ENCODE measurements at regions of chr1 and their contacts with region 1.

Region 1: GRCh38 chr1:246506674-246507481 is at the start of gene SMYD3:
- DNase-seq: peak; percentile 78
- H3K4me3 ChIP-seq: peak within 1 kb of the TSS; percentile 62 to 96 (median 66)
- H3K27ac ChIP-seq: peak within 1 kb of the TSS; percentile 68 to 76 (median 74)
- H3K4me1 ChIP-seq: peaks cover 7 to 13% (median 10%) of the 10 kb centered on the region in 4 donors
- H3K27me3 ChIP-seq: no peaks in the 10 kb centered on the region
- CTCF ChIP-seq: peak in 2 of 5 experiments; percentile 15 to 18
- EP300 ChIP-seq: no peak
- POLR2A ChIP-seq: peak; percentile 45
- total RNA-seq, gene SMYD3: 10.5 to 31.3 (median 25.8) TPM

Region 2: DNA sequence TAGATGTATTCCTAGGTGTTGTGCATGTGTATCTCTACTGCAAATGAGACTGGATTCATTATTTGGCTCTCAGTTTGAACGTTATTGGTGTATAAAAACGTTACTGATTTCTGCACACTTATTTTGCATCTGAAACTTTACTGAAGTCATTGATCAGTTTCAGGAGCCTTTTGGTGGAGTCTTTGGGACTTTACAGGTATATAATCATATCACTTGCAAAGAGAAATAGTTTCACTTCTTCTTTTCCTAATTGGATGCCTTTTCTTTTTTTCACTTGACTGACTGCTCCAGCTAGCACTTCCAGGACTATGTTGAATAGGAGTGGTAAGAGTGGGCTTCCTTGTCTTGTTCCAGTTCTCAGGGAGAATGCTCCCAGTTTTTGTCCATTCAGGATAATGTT is 252.0 kb before region 1 on chr1:
- in situ Hi-C with region 1: no loop called
- intact Hi-C with region 1: no loop called
- DNase-seq: no peak
- H3K4me3 ChIP-seq: no peak overlapping the region
- H3K27ac ChIP-seq: no peak overlapping the region
- H3K4me1 ChIP-seq: no peaks in the 10 kb centered on the region
- H3K27me3 ChIP-seq: no peaks in the 10 kb centered on the region
- CTCF ChIP-seq: no peak
- EP300 ChIP-seq: no peak
- POLR2A ChIP-seq: no peak

Region 3: GRCh38 chr1:246699095-246699735 is 192.3 kb after region 1 on chr1:
- in situ Hi-C with region 1: loop called in 1 of 4 experiments (anchors 10 kb)
- intact Hi-C with region 1: no loop called
- DNase-seq: peak; percentile 93
- H3K4me3 ChIP-seq: peak overlapping the region in 2 of 4 donors; percentile 7 to 36
- H3K27ac ChIP-seq: peak overlapping the region; percentile 41 to 71 (median 52)
- H3K4me1 ChIP-seq: peaks cover 8 to 32% (median 17%) of the 10 kb centered on the region in 4 donors
- H3K27me3 ChIP-seq: no peaks in the 10 kb centered on the region
- CTCF ChIP-seq: peak; percentile 83 to 86 (median 84)
- EP300 ChIP-seq: no peak
- POLR2A ChIP-seq: no peak

Region 4: GRCh38 chr1:246748880-246749279 is 242.0 kb after region 1 on chr1:
- in situ Hi-C with region 1: no loop called
- intact Hi-C with region 1: no loop called
- DNase-seq: no peak
- H3K4me3 ChIP-seq: no peak overlapping the region
- H3K27ac ChIP-seq: no peak overlapping the region
- H3K4me1 ChIP-seq: peaks cover 0 to 8% (median 0%) of the 10 kb centered on the region in 4 donors
- H3K27me3 ChIP-seq: no peaks in the 10 kb centered on the region
- CTCF ChIP-seq: no peak
- EP300 ChIP-seq: no peak
- POLR2A ChIP-seq: no peak

Measured in transverse colon (tissue), 4 donors.